ENCODE measurements at regions of chr10 and their contacts with region 1.

Region 1: DNA sequence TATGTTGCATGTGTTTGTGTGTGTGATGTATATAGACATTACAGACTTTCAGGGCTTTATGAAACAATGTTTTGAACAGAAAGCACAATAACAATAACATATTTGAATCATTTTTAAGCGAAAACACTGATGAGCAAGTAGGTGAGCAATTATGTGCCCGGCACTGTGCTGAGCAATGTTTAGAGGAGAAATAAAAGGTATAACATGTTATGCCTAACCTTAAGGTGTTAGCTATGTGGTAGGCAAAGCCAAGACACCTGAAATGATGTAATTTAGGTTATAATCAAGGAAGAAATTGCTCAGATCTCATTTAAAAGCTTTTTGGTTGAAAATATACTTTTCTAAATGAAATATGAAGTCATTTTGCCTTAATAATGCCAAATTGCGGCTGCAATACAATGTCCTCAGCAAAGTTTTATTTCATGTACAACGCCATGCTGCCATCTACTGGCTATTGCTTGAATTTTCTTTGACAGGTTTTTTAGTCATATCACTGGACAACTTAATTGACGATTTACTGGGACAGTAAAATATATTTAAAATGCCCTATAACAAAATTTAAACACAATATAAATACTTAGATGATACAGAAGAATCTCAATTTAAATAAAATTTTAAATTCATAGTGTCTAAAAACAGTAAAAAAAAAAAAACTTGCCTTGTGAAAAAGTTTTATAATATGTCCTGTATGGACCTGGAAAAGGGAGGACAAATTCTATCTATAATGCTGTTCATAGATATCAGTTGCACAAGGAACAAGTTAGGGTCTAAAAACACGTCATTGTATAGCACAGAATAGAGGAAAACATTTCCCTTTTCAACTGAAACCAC is 131.1 kb upstream of the CDK1 start:
- DNase-seq: peak; percentile 77

Region 2: DNA sequence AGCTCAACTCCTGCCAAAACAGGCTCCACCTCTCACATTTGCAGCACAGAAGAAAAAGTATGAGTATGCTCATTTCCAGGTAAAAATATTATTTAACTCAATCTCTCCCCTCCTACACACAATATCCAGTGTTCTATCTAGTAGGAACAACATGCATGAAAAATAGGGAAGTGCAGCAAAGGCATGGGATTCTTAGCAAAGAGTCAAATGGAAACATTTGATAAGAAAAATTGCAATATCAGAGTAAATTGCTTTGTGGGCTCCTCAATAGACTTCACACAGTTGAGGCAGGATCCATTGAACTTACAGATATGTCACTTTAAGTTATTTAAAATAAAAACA is 408.5 kb before region 1 on chr10:
- in situ Hi-C with region 1: no loop called
- DNase-seq: no peak

Region 3: GRCh38 chr10:60434418-60435046 is 212.6 kb before region 1 on chr10:
- in situ Hi-C with region 1: loop called (anchors 25 kb)
- DNase-seq: peak; percentile 71

Region 4: GRCh38 chr10:61016630-61017029 is 369.4 kb after region 1 on chr10:
- in situ Hi-C with region 1: no loop called
- DNase-seq: no peak

Measured in ACHN (cell line).